ENCODE measurements at regions of chr1 and their contacts with region 1.

Region 1: DNA sequence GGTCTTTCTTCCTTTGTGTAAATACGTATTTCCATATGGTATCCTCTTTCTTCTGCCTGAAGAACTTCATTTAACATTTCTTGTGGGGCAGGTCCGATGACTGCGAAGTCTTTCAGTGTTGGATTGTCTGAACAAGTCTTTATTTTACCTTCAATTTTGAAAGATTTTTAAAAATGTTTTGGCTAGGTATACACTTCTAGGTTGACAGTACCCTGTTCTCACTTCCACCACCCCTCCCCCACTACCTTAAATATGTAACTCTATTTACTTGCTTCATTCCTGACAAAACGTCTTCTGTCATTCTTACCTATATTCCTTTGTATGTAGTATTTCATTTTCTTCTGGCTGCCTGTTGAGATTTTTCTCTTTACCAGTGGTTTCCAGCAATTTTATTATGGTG is 85.7 kb upstream of the ARTN start:
- DNase-seq: no peak
- H3K4me3 Mint-ChIP-seq: no peak overlapping the region
- H3K27ac Mint-ChIP-seq: no peak overlapping the region
- H3K4me1 Mint-ChIP-seq: peaks cover 11% of the 10 kb centered on the region
- H3K27me3 Mint-ChIP-seq: no peaks in the 10 kb centered on the region
- CTCF ChIP-seq: no peak

Region 2: DNA sequence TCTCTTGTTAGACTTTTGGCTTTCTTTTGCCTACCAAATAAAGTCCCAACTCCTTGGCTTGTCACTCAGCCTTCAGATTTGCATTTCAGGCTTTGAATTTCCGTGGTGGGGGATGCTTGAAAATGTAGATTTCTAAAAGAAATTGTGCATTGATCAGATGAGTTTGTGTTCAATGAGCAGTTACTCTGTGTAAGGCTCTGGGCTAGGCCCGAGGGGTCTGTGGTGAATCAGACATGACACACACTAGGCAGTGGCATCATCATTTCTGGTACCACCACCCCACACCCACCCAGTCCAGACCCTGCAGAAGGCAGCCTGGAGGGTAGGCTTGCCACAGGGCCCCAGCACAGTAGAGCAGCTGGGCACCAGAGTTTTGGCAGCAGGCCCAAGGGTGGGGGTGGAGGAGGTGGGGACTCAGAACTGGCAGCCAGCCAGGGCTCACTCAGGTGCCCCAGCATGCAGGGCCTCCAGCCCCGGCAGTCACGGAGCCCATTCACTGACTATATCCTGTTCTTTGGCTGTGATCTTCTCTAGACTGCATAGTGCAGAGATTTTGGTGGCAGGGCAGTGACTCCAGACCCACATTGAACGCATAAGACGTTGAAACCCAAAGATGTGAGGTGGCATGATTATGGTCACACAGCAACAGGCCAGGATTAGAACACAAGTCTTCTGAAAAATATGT is 11.5 kb before region 1 on chr1:
- CTCF ChIA-PET with region 1: interaction called, 11 read pairs
- intact Hi-C with region 1: no loop called
- DNase-seq: peak; percentile 94
- H3K4me3 Mint-ChIP-seq: no peak overlapping the region
- H3K27ac Mint-ChIP-seq: peak overlapping the region; percentile 41
- H3K4me1 Mint-ChIP-seq: peaks cover 58% of the 10 kb centered on the region
- H3K27me3 Mint-ChIP-seq: no peaks in the 10 kb centered on the region
- CTCF ChIP-seq: no peak

Measured in Calu3 (cell line).